Activated naive CD4-positive, alpha-beta T cell treated with anti-CD3 and anti-CD28 coated beads for 36 hours (primary cell): ENCODE measurements at regions of chr1 and their contacts with region 1.

Region 1: GRCh38 chr1:153922972-153923925 is at the start of gene GATAD2B:
- DNase-seq: peak; percentile 100
- H3K4me3 Mint-ChIP-seq: peak within 1 kb of the TSS; percentile 81
- H3K27ac Mint-ChIP-seq: peak within 1 kb of the TSS; percentile 94
- H3K4me1 Mint-ChIP-seq: peaks cover 36% of the 10 kb centered on the region
- H3K27me3 Mint-ChIP-seq: no peaks in the 10 kb centered on the region
- total RNA-seq, gene GATAD2B: 69.0 to 70.2 TPM

Region 2: DNA sequence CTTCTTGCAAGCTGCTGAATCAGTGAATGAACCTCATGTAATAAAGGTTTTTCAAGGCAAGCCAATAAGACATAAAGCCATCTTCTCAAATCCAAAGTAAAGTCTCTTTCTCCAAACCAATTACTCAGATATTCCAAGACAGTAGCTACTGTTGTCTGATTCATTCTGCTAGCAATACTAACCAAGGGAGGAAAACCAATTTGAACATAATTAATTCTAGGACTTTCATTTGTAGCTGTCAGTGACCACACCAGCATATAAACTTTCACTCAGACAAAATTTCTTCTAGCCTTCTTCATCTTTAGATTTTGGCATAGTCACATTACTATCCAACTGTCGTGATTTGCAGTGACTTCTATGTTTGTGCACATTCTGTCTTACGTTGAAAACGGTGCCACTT is 205.9 kb before region 1 on chr1:
- CTCF ChIA-PET with region 1: no interaction called
- intact Hi-C with region 1: no loop called
- DNase-seq: no peak
- H3K4me3 Mint-ChIP-seq: no peak overlapping the region
- H3K27ac Mint-ChIP-seq: no peak overlapping the region
- H3K4me1 Mint-ChIP-seq: peaks cover 9% of the 10 kb centered on the region
- H3K27me3 Mint-ChIP-seq: no peaks in the 10 kb centered on the region

Region 3: GRCh38 chr1:153742411-153743142 is 180.7 kb before region 1 on chr1:
- CTCF ChIA-PET with region 1: no interaction called
- intact Hi-C with region 1: no loop called
- DNase-seq: no peak
- H3K4me3 Mint-ChIP-seq: no peak overlapping the region
- H3K27ac Mint-ChIP-seq: no peak overlapping the region
- H3K4me1 Mint-ChIP-seq: peaks cover 19% of the 10 kb centered on the region
- H3K27me3 Mint-ChIP-seq: no peaks in the 10 kb centered on the region

Region 4: DNA sequence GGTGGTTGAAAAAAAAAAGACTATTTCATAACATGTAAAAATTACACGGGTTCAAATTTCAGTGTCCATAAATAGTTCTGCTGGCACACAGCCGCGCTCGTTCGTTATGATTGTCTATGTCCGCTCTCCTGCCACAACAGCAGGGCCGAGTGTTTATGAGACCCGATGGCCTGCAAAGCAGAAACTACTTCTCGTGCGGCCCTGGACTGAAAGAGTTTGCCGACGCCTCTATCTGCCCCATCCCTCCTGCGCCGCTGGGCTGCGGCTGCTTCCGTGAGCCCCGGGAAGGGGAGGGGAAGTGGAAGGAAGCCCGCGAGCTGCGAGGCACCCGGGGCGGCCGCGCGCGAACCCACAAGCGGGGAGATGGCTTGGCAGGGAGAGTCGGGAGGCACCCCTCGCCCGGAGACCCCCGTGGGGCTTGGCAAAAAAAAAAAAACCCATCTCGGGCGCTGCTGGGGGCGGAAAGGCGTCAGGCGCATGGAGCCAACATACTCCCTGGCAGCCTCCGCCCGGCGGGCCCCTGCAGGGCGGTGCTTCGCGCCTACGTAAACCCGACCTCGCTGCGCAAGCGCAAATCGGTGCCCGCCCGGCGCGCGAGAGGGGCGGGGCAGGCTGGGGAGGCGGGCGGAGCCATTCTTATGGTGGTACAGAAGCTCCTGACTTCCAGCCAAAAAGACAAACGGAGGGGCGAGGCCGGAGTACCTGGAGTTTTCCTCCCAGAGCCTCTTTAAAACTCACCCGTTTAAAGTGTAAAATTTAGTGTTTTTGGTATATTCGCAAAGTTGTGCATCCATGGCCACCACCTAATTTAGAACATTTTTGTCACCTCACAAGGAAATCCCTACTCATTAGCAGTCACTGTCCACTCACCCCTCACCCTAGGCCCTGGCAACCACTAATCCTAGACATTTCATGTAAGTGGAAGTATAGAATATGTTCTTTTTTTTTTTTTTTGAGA is 139.7 kb before region 1 on chr1:
- CTCF ChIA-PET with region 1: no interaction called
- intact Hi-C with region 1: loop called (anchors 1 kb)
- DNase-seq: peak; percentile 93
- H3K4me3 Mint-ChIP-seq: peak overlapping the region; percentile 95
- H3K27ac Mint-ChIP-seq: peak overlapping the region; percentile 92
- H3K4me1 Mint-ChIP-seq: peaks cover 5% of the 10 kb centered on the region
- H3K27me3 Mint-ChIP-seq: no peaks in the 10 kb centered on the region

Region 5: DNA sequence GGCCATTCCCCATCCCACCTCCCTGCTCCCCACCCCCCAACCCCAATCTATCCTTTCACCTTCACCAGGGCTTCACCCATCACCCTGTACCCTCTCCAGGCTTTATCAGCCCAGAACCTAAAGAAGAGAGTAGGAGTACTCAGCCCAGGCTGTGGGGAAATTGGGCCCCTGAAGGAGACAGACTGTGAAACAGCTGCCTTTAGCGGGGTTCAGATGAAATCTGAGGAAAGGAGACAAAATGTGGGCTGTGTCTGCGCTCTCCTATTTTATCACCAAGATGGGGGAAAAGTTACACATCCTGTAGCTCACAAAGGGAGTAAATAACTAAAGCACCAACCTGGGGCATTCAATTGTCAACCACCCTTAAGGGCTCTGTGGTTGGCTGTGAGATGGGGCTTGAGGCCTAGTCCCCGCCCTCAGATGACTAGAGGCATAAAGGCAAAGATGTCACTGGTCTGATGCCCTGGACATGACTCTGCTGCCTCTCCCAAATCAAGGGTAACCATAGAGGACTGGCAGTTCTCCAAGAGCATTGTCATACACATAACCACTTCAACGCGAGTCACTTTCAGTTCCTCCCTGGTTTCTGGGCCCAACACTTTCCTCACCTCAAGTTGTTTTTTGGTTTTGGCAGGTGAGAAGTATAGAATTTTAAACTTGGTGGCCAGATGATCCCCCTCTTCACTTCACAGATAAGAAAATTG is 118.1 kb before region 1 on chr1:
- CTCF ChIA-PET with region 1: interaction called, 4 read pairs
- intact Hi-C with region 1: loop called (anchors 1 kb)
- DNase-seq: peak; percentile 88
- H3K4me3 Mint-ChIP-seq: peak overlapping the region; percentile 17
- H3K27ac Mint-ChIP-seq: peak overlapping the region; percentile 90
- H3K4me1 Mint-ChIP-seq: peaks cover 27% of the 10 kb centered on the region
- H3K27me3 Mint-ChIP-seq: no peaks in the 10 kb centered on the region

Region 6: DNA sequence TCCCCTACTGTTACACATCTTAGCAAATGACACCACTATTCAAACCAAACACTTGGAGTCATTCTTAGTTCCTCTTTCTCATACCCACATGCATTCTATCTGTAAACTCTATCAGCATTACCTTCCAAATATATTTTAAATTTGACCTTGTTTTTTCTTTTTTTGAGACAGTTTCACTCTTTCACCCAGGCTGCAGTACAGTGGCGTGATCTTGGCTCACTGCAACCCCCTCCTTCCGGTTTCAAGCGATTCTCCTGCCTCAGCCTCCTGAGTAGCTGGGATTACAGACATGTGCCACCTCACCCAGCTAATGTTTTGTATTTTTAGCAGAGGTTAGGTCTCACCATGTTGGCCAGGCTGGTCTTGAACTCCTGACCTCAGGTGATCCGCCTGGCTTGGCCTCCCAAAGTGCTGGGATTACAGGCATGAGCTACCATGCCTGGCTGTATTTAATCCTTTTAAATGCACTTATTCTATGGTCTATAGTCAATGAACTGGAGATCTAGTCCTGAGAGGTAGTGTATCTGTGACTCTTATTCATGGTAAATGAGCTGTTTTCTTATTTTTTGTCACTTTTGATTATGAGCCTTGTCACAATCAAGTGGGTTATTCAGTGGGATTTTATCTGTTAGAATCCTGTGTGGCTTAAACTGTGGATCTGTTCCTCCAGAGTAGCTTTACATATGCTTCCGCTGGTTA is 73.6 kb before region 1 on chr1:
- CTCF ChIA-PET with region 1: interaction called, 3 read pairs
- intact Hi-C with region 1: loop called (anchors 2 kb)
- DNase-seq: peak; percentile 53
- H3K4me3 Mint-ChIP-seq: no peak overlapping the region
- H3K27ac Mint-ChIP-seq: peak overlapping the region; percentile 78
- H3K4me1 Mint-ChIP-seq: peaks cover 33% of the 10 kb centered on the region
- H3K27me3 Mint-ChIP-seq: no peaks in the 10 kb centered on the region

Region 7: DNA sequence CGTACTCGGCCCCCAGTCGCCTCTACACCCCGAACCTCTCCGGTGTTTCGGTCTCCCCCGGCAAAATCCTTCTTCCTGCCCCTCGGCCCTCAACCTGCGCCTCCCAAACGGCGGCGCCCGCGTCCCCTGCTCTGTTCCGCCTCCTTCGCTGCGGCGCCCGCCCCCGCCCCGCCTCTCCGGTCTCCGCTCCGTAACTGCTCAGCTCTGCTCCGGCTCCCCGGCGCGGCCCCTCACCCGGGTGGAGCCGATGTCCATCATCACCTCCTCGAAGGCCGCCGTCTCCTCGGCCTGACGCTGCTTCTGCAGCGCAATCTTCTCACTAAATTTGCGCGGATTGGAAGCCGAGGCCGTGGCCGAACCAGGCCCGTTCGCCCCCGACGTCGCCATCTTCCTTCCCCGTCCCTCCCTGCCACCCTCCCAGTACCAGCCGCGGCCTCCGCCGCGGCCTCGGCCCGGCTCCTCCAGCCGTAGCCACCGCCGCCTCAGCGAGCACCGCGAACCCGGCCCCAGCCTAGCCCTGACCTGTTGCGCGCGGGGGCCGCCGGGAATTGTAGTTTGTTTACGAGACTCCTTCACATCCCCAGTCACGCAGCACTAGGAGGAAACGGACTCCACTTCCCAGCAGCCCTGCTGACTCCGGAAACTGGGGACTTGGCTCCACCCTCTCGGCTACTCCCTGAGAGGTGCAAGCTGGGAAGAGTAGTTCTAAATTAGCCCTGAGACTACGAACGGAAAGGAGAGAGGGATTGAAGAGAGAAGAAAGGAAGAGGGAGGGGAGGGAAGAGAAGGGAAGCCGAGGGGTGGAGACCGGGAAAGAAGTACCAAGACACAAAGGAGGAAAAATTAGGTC is 35.1 kb after region 1 on chr1 and contains the start of gene CRTC2:
- CTCF ChIA-PET with region 1: interaction called, 4 read pairs
- intact Hi-C with region 1: loop called (anchors 1 kb)
- DNase-seq: peak; percentile 99
- H3K4me3 Mint-ChIP-seq: peak within 1 kb of the TSS; percentile 86
- H3K27ac Mint-ChIP-seq: peak within 1 kb of the TSS; percentile 92
- H3K4me1 Mint-ChIP-seq: peaks cover 53% of the 10 kb centered on the region
- H3K27me3 Mint-ChIP-seq: no peaks in the 10 kb centered on the region
- total RNA-seq, gene CRTC2: 72.6 to 83.0 TPM

Region 8: DNA sequence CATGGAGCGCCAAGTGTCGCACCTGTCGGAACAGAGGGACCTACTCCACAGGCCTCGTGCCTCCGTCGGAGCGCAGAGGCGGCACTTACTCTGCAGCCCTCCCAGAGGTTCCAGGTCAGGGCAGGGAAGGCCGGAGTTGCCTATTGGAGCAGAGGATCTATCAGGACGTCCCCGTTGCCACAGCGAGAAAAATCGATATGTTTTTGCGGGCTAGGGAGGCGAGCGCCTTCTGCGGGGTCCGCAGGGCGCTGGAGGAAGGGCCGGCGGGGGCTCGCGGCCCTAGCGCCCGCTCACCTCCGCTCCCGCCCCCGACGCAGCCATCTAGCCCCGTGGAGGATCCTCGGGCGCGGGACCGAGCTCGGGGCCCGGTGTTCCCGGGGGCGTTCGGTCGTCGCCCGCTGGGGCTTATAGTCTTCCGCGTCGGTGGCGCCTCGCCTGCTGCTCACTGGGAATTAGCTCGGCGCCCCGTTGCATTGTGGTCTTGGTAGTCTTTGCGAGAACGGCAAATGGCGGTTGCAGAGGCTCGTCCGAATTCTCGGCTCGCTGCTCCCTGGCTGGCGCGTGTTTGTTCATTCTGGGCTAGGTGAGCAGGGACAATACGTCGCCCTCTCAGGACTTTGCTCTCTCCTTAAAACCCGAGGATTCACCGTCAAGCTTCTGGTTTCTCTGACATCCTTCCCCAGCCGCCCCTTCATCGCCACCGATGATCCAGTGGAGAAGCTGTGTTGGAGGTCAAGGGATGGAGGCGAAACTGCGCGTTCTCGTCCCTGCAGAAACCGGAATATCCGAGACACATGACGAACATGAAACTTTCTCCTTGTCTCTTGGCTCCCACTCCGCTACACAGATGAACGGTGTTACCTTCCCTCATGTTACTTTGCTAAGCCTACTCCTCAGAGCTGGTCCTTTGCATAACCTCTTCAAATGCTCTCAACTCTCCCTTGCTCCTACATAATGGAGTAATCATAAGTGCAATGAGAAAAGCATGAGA is 54.3 kb after region 1 on chr1 and contains the start of gene JTB:
- CTCF ChIA-PET with region 1: interaction called, 3 read pairs
- intact Hi-C with region 1: loop called (anchors 1 kb)
- DNase-seq: peak; percentile 94
- H3K4me3 Mint-ChIP-seq: peak within 1 kb of the TSS; percentile 97
- H3K27ac Mint-ChIP-seq: peak within 1 kb of the TSS; percentile 95
- H3K4me1 Mint-ChIP-seq: peaks cover 37% of the 10 kb centered on the region
- H3K27me3 Mint-ChIP-seq: no peaks in the 10 kb centered on the region
- total RNA-seq, gene JTB: 126 to 131 TPM